Activated CD4-positive, alpha-beta memory T cell treated with anti-CD3 and anti-CD28 coated beads for 36 hours (primary cell): ENCODE measurements at regions of chr3 and their contacts with region 1.

Region 1: DNA sequence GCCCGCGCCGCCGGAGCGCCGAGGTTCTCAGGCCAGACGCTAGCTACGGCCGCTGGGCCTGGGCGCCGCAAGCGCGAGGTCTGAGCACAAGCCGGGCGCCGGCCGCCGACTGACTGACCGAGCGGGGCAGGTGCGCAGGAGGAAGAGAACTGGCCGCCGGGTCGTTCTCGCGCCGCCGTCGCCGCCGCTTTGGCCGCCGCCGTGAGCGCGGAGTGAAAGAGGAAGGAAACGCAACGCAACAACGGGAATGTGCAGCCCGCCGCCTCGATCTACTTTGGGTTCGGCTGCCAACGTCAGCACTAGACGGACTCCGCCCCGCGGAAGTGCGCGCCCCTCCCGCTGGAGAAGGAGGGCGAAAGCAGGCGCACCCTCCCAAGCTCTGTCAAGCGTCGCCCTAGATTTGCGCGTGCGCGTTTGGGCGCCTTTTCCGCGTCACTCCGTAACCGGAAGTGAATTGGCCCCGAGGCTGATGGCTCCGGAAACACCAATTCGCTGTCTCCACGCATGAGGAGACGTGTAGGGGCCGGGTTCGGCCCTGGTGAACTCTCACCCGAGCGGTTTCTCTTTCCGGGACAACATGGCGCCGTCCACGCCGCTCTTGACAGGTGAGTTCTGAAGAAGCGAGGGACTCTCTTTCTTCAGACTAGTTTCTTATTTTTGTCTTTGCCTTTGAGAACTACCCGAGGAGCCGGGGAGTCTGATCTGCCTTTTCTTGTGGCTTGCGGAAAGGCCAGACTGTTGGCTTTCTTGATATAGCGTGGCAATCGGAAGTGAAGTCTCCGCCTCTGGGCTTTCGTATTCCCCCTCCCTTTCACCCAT is at the starts of genes EIF2A and SERP1:
- DNase-seq: peak; percentile 100
- H3K4me3 Mint-ChIP-seq: peak within 1 kb of the TSS; percentile 99
- H3K27ac Mint-ChIP-seq: peak within 1 kb of the TSS; percentile 96
- H3K4me1 Mint-ChIP-seq: peaks cover 58% of the 10 kb centered on the region
- H3K27me3 Mint-ChIP-seq: no peaks in the 10 kb centered on the region
- total RNA-seq, gene EIF2A: 131 to 137 TPM
- total RNA-seq, gene SERP1: 100 to 111 TPM

Region 2: GRCh38 chr3:150582620-150583019 is 36.2 kb after region 1 on chr3:
- CTCF ChIA-PET with region 1: interaction called, 3 read pairs
- POLR2A ChIA-PET with region 1: no interaction called
- intact Hi-C with region 1: loop called (anchors 2 kb)
- DNase-seq: no peak
- H3K4me3 Mint-ChIP-seq: no peak overlapping the region
- H3K27ac Mint-ChIP-seq: peak overlapping the region; percentile 81
- H3K4me1 Mint-ChIP-seq: peaks cover 12% of the 10 kb centered on the region
- H3K27me3 Mint-ChIP-seq: no peaks in the 10 kb centered on the region

Region 3: DNA sequence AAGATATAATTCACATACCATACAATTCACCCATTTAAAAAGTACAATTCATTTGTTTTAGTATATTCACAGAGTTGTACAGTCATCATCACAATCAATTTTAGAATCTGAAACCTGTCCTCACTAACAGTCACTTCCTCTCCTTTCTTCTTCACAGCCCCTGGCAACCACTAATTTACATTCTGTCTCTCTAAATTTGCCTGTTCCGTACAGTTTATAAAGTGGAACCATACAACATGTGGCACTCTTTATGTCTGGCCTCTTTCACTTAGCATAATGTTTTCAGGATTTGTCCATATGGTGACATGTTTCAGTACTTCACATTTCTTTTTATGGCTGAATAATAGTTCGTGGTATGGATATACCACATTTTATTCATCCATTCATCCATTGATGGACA is 134.6 kb after region 1 on chr3:
- CTCF ChIA-PET with region 1: no interaction called
- POLR2A ChIA-PET with region 1: no interaction called
- intact Hi-C with region 1: loop called (anchors 5 kb)
- DNase-seq: no peak
- H3K4me3 Mint-ChIP-seq: no peak overlapping the region
- H3K27ac Mint-ChIP-seq: no peak overlapping the region
- H3K4me1 Mint-ChIP-seq: peaks cover 22% of the 10 kb centered on the region
- H3K27me3 Mint-ChIP-seq: no peaks in the 10 kb centered on the region

Region 4: GRCh38 chr3:150710097-150710496 is 163.7 kb after region 1 on chr3:
- CTCF ChIA-PET with region 1: no interaction called
- POLR2A ChIA-PET with region 1: no interaction called
- intact Hi-C with region 1: no loop called
- DNase-seq: no peak
- H3K4me3 Mint-ChIP-seq: no peak overlapping the region
- H3K27ac Mint-ChIP-seq: no peak overlapping the region
- H3K4me1 Mint-ChIP-seq: peaks cover 5% of the 10 kb centered on the region
- H3K27me3 Mint-ChIP-seq: no peaks in the 10 kb centered on the region

Region 5: DNA sequence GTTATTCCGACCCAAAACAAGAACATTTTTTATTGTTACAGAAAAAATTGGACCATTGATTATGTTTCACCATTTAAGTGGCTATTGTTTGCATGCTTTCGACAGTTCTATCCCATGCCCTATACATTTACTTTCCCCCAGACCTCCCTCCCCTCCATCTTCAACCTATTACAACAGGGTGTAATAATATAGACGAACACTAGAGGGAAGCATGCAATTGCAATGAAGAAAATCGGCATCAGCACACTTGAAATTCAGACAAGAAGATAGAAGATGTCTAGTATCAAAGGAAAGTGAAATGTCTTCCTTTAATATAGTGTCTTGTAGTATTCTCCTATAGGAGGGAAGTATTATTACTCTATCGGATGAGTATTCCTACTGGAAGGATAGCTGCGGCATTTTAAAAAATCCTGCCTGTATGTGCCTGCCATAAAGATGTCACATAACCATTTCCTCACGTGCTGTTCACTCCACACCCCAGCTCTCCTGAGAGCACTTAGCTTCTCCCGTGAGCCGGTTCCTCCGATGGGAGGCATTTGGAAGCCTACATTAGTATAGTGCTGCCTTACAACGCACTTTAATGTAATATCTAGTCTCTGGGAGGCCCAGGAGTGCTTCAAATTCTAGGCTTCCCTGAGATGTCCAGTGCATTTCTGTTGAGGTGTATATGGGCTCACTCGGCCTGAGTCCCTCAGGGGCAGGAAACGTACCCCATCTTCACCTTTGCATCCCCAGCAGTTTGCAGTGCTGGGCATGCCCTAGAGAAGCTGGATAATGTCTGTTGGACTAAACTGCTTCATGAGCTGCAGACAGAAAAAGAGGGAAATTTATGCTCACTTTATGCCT is 175.1 kb after region 1 on chr3:
- CTCF ChIA-PET with region 1: interaction called, 3 read pairs
- POLR2A ChIA-PET with region 1: no interaction called
- intact Hi-C with region 1: loop called (anchors 5 kb)
- DNase-seq: no peak
- H3K4me3 Mint-ChIP-seq: peak overlapping the region; percentile 29
- H3K27ac Mint-ChIP-seq: no peak overlapping the region
- H3K4me1 Mint-ChIP-seq: peaks cover 24% of the 10 kb centered on the region
- H3K27me3 Mint-ChIP-seq: no peaks in the 10 kb centered on the region

Region 6: GRCh38 chr3:151086484-151087456 is 540.3 kb after region 1 on chr3:
- CTCF ChIA-PET with region 1: no interaction called
- POLR2A ChIA-PET with region 1: no interaction called
- intact Hi-C with region 1: loop called (anchors 5 kb)
- DNase-seq: peak; percentile 86
- H3K4me3 Mint-ChIP-seq: peak overlapping the region; percentile 80
- H3K27ac Mint-ChIP-seq: no peak overlapping the region
- H3K4me1 Mint-ChIP-seq: peaks cover 11% of the 10 kb centered on the region
- H3K27me3 Mint-ChIP-seq: peaks cover 27% of the 10 kb centered on the region

Region 7: DNA sequence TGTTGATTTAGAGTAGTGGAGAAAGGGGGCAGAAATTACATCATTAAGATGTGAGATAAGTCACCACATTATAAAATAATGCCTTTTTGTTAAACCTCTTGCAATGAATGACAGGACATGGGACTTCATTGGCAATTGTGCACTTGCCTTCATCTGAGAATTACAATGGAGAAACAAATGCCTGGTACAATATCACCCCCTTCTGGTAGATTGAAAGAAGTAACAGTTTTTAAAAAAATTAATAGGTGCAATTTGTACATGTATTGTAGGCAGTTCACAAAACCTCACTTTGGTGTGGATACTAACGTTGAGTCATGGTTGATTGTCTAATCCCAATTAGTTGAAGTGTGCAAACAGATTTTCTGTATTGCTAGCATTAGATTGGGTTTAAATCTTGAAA is 736.5 kb after region 1 on chr3:
- CTCF ChIA-PET with region 1: no interaction called
- POLR2A ChIA-PET with region 1: no interaction called
- intact Hi-C with region 1: loop called (anchors 10 kb)
- DNase-seq: no peak
- H3K4me3 Mint-ChIP-seq: no peak overlapping the region
- H3K27ac Mint-ChIP-seq: peak overlapping the region; percentile 62
- H3K4me1 Mint-ChIP-seq: peaks cover 32% of the 10 kb centered on the region
- H3K27me3 Mint-ChIP-seq: no peaks in the 10 kb centered on the region